ENCODE measurements at regions of chr1 and their contacts with region 1.

Region 1: DNA sequence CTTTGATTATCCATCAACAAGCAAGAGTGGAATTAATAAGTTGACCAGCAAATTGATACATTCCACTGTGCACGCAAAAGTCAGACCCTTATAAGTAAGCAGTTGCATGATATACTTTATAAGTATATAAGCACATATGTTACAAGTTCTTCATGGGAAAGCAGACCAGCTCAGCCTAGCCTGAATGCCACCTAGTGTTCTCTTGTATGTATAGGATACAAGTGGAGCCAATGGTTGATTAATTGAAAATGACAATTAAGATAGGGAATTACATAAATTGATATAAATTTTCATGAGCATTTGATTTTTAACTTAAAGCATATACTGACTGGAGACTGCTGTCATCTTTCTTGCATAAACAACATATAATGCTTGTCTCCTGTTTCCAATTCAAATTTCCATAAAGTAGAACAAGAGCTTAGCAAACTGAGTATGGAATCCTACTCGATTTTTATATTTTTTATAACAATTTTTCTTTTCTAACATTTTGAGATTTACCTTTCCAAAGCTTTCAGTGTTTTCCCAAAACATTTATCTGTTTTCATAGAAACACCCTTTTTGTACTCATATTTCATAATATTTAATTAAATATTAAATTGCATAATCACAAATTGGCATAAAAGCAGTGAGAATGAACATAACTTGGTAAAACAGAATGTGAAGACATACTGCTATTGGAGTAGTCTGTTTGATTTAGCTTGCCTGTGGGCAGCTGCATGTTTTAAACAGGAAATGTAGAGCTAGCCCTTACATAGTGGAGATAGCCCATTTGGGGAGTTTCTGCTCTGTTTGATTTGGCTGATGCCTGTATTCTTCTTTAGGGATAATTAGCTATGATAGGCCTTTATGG is 62.8 kb downstream of the MAGI3 start:
- DNase-seq: no peak
- ATAC-seq: peak in 1 of 8 donors; percentile 48
- H3K4me3 ChIP-seq: no peak overlapping the region
- H3K27ac ChIP-seq: no peak overlapping the region
- H3K4me1 ChIP-seq: peaks cover 0 to 44% (median 5%) of the 10 kb centered on the region in 9 donors
- H3K27me3 ChIP-seq: no peaks in the 10 kb centered on the region
- CTCF ChIP-seq: peak in 8 of 9 donors; percentile 15 to 56 (median 47)

Region 2: GRCh38 chr1:113133038-113133437 is 320.1 kb before region 1 on chr1:
- intact Hi-C with region 1: loop called in 1 of 10 experiments (anchors 10 kb)
- DNase-seq: no peak
- ATAC-seq: no peak
- H3K4me3 ChIP-seq: no peak overlapping the region
- H3K27ac ChIP-seq: no peak overlapping the region
- H3K4me1 ChIP-seq: peaks cover 0 to 8% (median 0%) of the 10 kb centered on the region in 9 donors
- H3K27me3 ChIP-seq: no peaks in the 10 kb centered on the region
- CTCF ChIP-seq: no peak

Region 3: GRCh38 chr1:113140588-113141446 is 312.3 kb before region 1 on chr1:
- intact Hi-C with region 1: loop called in 5 of 10 experiments (anchors 5 to 10 kb)
- DNase-seq: peak; percentile 32 to 66
- ATAC-seq: peak; percentile 77 to 92 (median 90)
- H3K4me3 ChIP-seq: peak overlapping the region in 4 of 10 donors; percentile 2 to 24 (median 12)
- H3K27ac ChIP-seq: peak overlapping the region in 6 of 10 donors; percentile 6 to 68 (median 54)
- H3K4me1 ChIP-seq: peaks cover 7 to 37% (median 30%) of the 10 kb centered on the region in 9 donors
- H3K27me3 ChIP-seq: no peaks in the 10 kb centered on the region
- CTCF ChIP-seq: peak; percentile 68 to 91 (median 84)